ENCODE measurements at regions of chr6 and their contacts with region 1.

Region 1: GRCh38 chr6:139375232-139376016 is 976 bp upstream of the CITED2 start:
- DNase-seq: peak; percentile 87
- H3K4me3 Mint-ChIP-seq: peak overlapping the region; percentile 86
- H3K27ac Mint-ChIP-seq: peak overlapping the region; percentile 87
- H3K4me1 Mint-ChIP-seq: peaks cover 36% of the 10 kb centered on the region
- H3K27me3 Mint-ChIP-seq: no peaks in the 10 kb centered on the region
- CTCF ChIP-seq: no peak

Region 2: DNA sequence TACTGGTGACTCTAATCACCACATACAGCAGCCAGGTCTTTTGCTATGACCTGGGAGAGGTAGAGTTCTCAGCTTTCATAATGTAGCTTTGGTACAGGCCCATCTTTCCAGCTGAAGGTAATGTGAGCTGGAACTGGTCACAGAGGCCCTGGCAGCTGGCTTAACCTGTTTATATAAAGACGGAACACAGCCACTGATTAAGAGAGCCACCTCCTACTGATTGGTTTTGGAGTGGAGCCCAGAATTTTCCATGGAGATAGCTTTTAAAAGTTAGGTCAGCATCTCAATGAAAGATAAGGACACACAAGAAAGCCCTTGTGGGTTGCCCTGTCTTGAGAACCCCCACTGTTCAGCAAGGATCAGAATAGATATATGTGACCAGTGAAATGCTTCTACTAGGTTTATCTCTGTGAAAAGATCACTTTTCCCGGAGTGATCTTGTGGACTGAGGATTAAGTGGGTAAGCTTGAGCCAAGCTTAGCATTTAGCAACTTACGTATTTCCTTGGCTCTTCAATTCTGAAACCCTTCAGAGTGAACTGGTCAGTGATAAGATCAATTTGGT is 212.7 kb after region 1 on chr6:
- CTCF ChIA-PET with region 1: interaction called, 12 read pairs
- intact Hi-C with region 1: loop called (anchors 2 kb)
- DNase-seq: peak; percentile 66
- H3K4me3 Mint-ChIP-seq: peak overlapping the region; percentile 59
- H3K27ac Mint-ChIP-seq: peak overlapping the region; percentile 91
- H3K4me1 Mint-ChIP-seq: peaks cover 56% of the 10 kb centered on the region
- H3K27me3 Mint-ChIP-seq: no peaks in the 10 kb centered on the region
- CTCF ChIP-seq: no peak

Region 3: DNA sequence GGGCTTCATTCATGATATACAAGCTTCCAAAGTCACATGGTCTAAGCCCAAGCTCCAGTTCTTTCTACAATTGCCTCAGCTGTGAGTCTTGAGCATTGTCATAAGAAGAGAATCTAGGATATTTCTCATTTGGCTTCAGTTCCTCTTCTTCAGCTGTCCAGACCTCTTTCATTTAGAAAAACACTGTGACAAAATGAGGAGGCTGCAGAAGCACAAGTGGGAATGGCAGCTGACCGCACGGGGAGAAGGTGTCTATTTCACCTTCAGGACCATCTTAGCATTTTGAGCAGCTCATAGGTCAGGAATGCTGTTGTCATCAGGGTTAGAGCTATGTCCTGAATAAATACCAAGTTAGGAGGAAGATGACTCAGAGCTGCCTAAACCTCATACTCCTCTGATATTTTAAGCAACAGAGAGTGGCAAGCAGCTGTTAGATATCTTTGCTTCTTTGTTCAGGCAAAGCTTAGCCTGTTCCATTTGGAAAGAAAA is 389.1 kb after region 1 on chr6:
- CTCF ChIA-PET with region 1: no interaction called
- intact Hi-C with region 1: loop called (anchors 10 kb)
- DNase-seq: peak; percentile 3
- H3K4me3 Mint-ChIP-seq: no peak overlapping the region
- H3K27ac Mint-ChIP-seq: no peak overlapping the region
- H3K4me1 Mint-ChIP-seq: peaks cover 24% of the 10 kb centered on the region
- H3K27me3 Mint-ChIP-seq: no peaks in the 10 kb centered on the region
- CTCF ChIP-seq: no peak

Region 4: GRCh38 chr6:139881728-139882211 is 506.3 kb after region 1 on chr6:
- CTCF ChIA-PET with region 1: interaction called, 3 read pairs
- intact Hi-C with region 1: loop called (anchors 10 kb)
- DNase-seq: peak; percentile 45
- H3K4me3 Mint-ChIP-seq: no peak overlapping the region
- H3K27ac Mint-ChIP-seq: no peak overlapping the region
- H3K4me1 Mint-ChIP-seq: peaks cover 9% of the 10 kb centered on the region
- H3K27me3 Mint-ChIP-seq: no peaks in the 10 kb centered on the region
- CTCF ChIP-seq: peak; percentile 51

Region 5: DNA sequence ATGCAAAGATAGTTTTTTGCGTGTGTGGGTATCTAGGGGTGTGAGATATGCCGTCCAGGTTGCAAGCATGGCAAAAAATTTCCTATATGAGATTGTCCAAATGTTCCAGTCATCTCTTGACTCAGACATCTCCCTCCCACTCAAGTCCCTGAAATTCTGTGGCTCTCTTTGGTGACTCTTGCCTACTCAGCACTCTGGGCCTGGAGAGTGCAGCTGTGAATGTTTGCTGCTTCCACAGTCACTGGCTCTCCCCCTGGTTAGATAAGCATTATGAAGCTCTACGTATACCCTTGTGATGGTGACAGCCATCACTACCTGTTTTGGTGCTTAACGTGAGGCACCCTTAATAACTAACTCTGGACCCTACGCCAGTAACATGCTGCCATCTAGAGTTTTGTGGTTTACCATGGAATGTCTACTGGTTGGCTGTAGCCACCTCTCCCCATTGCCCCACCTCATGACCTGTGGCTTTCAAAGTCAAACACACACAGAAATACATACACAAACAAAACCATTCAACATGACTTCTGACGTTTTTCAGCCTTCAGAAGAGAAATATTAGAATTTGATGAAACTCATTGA is 620.9 kb after region 1 on chr6:
- CTCF ChIA-PET with region 1: no interaction called
- intact Hi-C with region 1: loop called (anchors 5 kb)
- DNase-seq: peak; percentile 43
- H3K4me3 Mint-ChIP-seq: no peak overlapping the region
- H3K27ac Mint-ChIP-seq: no peak overlapping the region
- H3K4me1 Mint-ChIP-seq: peaks cover 10% of the 10 kb centered on the region
- H3K27me3 Mint-ChIP-seq: no peaks in the 10 kb centered on the region
- CTCF ChIP-seq: no peak

Measured in Calu3 (cell line).